ENCODE measurements at regions of chr19 and their contacts with region 1.

Region 1: DNA sequence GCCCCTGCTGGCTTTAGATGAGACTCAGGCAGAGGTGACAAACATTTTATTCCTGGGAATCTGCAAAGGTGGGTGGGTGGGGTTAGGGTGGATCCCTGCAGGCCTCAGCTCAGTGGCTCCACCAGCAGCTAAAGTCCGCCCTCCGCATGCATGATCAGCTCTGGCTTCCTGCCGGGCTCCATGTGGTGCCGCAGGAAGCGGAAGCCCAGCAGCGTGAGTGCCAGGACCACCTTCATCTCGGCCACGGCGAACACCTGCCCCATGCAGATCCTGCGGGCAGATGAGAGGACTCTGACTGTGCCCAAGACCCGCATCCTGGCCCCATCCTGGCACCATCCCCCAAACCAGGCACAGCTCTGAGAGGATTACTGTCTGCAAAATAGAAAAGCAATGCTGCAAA is 26.3 kb downstream of the CYP4F2 start:
- DNase-seq: no peak
- H3K4me3 ChIP-seq: no peak overlapping the region
- H3K27ac ChIP-seq: no peak overlapping the region
- H3K4me1 ChIP-seq: no peaks in the 10 kb centered on the region
- H3K27me3 ChIP-seq: no peaks in the 10 kb centered on the region
- CTCF ChIP-seq: no peak
- POLR2A ChIP-seq: no peak

Region 2: DNA sequence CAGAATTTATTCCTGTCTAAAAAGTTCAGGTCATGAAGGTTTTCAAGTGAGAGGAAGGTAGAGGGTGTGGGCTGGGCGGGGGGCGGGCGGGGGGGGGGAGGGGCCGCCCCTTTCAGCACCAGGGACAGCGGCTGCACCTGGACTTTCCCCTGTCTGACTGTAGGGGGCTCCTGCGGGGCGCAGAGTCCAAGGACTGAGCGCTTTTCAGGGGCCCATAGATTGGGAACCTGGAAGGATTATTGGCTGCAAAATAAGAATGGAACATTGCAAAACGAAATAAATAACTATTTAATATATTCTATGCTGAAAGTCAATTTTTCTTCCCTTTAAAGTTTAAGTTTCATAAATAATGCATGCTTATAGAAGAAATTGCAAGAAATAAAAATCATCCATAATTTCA is 239.8 kb before region 1 on chr19:
- intact Hi-C with region 1: loop called (anchors 10 kb)
- DNase-seq: peak; percentile 43
- H3K4me3 ChIP-seq: no peak overlapping the region
- H3K27ac ChIP-seq: no peak overlapping the region
- H3K4me1 ChIP-seq: no peaks in the 10 kb centered on the region
- H3K27me3 ChIP-seq: no peaks in the 10 kb centered on the region
- CTCF ChIP-seq: peak in 1 of 3 experiments; percentile 11
- POLR2A ChIP-seq: no peak

Region 3: DNA sequence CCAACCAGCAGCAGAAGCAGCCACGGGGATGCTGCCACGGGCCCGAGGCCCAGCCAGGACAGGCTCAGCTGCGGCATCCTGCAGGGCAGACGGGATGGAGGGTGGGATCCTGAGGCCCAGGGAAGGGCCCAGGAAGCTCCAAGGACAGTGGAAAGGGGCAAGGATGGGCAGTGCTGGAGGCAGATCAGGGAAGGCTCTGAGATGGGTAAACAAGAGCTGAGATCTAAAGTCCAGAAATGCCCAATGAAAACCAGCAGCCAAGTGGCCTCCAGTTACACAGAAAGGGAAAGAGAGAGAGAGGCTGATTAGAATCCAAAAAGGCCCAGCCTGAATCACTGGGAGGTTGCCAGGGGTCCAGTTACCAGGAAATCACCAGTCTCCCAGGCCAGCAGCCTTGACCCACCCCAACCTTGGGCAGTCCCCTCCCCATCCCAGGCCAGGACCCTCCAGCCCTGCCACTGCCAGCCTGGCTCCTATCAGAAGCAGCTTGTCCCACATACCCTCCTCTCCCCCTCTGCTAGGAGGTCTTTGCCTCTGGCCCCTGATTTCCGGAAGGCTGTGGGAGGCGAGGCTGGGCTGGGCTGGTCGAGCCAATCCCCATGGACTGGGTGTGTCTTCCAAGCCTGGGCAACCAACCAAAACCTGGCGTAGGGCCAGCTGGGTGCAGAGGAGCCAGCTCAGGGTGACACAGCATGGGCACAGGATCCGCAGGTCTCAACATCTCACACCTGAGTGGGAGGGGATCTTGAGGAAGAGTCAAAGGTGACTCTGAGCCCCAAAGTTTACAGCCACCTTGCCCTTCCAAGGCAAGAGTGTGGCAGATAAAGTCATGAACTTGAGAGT is 63.0 kb after region 1 on chr19 and contains the start of gene CYP4F11:
- intact Hi-C with region 1: no loop called
- DNase-seq: peak; percentile 83
- H3K4me3 ChIP-seq: no peak within 1 kb of the TSS
- H3K27ac ChIP-seq: no peak within 1 kb of the TSS
- H3K4me1 ChIP-seq: no peaks in the 10 kb centered on the region
- H3K27me3 ChIP-seq: no peaks in the 10 kb centered on the region
- CTCF ChIP-seq: no peak
- POLR2A ChIP-seq: no peak
- total RNA-seq, gene CYP4F11: 2.6 to 4.3 TPM